ENCODE measurements at regions of chr7 and their contacts with region 1.

Region 1: GRCh38 chr7:50266635-50267386 is 37.7 kb upstream of the IKZF1 start:
- H3K4me3 Mint-ChIP-seq: peak overlapping the region; percentile 27
- H3K27ac Mint-ChIP-seq: peak overlapping the region; percentile 81
- H3K4me1 Mint-ChIP-seq: peaks cover 86% of the 10 kb centered on the region
- H3K27me3 Mint-ChIP-seq: no peaks in the 10 kb centered on the region

Region 2: DNA sequence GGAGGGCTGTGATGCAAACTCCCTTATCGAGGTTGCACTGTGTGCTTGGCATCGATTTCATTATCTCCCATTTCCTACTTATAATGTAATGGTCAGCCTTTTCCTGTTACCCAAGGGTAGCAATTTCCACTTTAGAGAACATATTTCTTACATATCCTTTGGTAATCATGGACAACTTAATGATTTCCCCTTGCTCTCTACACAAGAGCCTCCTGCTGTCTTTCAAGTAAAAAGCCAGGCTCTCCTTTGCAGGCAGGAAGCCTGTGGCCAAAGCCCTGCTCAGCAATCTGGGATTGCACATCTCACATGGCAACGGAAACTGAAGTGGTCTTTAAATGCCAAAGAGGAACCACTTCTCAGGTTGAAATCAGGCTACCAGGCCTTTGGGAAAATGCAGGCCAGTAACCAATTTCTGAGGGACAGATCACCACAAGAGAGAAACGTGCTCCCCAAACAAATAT is 49.0 kb before region 1 on chr7:
- intact Hi-C with region 1: no loop called
- H3K4me3 Mint-ChIP-seq: no peak overlapping the region
- H3K27ac Mint-ChIP-seq: peak overlapping the region; percentile 55
- H3K4me1 Mint-ChIP-seq: peaks cover 81% of the 10 kb centered on the region
- H3K27me3 Mint-ChIP-seq: no peaks in the 10 kb centered on the region

Region 3: DNA sequence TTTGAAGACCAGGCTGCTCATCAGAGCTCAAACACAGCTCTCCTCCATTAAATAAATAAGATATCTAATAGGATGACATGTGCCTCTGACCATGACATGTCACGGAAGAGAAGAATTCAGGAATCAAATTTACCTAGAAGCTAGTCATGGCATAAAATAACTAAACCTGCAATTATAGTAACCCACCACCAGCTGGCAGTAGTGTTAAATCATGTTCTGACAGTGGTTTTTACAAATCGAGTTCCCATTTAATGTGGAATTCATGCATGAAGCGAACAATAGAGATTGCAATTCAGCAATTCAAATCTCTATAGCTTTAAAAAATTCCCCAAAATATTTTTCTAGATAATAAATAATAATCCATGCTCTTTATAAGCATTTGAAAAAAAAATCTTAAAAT is 36.8 kb before region 1 on chr7:
- intact Hi-C with region 1: loop called (anchors 5 kb)
- H3K4me3 Mint-ChIP-seq: no peak overlapping the region
- H3K27ac Mint-ChIP-seq: no peak overlapping the region
- H3K4me1 Mint-ChIP-seq: peaks cover 31% of the 10 kb centered on the region
- H3K27me3 Mint-ChIP-seq: no peaks in the 10 kb centered on the region

Region 4: DNA sequence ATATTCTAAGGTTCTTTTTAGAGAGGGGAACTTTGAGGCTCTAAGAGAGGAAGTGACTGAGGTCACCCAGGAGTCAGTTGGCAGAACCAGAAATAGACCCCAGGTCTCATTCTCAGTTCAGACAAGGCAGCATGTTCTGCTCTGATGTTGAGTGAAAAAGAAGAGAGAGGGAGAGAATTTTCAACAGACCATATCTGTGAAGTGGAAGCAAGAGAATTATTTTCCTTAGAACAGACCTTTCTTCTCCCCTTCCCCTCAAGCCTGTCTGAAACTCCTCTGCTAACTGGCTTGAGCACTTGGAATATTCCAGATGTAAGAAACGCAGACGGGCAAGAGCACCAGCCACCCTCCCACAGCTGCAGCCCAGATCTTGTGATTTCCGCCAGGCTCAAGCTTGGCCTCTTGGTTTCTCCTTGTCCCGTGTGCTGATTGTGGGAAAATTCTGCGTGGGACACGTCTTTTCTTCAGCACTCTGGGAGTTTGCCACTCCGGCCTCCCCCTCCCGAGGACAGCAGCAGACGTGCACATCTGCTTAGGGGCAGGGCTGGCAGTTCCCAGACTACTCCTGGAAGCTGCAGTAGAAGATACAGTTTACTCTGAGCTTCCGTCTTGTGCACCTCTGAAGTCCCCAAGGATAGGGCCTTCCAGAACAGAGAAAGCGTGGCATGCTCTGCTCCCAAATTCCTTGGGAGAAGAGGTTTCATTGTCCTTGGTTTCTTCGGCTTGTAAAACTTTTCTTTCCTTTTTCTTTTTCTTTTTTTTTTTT is 15.1 kb after region 1 on chr7:
- intact Hi-C with region 1: loop called (anchors 2 kb)
- H3K4me3 Mint-ChIP-seq: peak overlapping the region; percentile 48
- H3K27ac Mint-ChIP-seq: peak overlapping the region; percentile 74
- H3K4me1 Mint-ChIP-seq: peaks cover 64% of the 10 kb centered on the region
- H3K27me3 Mint-ChIP-seq: no peaks in the 10 kb centered on the region